Ascending aorta (tissue), 2 donors: ENCODE measurements at regions of chr10 and their contacts with region 1.

Region 1: DNA sequence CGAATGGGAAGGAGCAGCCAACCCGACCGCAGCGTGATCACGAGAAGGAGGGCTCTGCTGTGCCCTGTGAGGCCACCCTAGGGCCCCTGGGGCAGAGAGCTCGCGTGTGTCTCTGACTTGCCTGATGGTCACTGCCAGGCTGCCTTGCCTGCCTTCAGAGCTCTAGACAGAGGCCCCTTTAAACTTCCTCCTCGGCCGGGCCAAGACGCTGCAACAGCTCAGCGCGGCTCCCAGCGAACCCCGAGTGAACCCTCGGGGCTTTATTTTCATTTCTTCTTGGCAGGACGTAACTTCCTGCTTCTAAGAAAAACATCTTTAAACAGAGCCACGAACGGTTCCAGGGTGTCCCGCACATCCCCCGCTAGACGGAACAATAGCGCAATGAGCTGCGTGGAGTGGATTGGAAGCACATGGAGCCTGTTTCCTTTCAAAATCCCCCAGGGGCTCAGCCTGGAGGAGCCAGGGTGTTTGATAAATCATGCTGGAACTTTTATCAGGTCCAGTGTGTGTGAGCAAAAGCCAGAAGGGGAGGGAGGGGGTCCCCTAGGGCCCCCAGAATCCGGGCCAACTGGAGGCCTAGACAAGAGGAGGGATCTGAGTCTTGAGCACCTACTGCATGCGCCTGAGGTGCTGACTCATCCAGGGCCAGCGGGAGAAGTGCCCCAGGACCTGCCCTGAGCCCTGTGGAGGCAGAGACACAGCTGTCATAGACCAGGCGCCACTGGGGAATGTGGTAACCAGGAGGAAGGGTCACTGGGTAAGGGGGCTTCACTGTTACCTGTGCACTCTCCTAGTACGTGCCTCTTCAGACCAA is 134.1 kb upstream of the GDF10 start:
- DNase-seq: peak; percentile 51 to 90
- H3K4me3 ChIP-seq: peak overlapping the region; percentile 29 to 49
- H3K27ac ChIP-seq: peak overlapping the region; percentile 90 to 93
- H3K4me1 ChIP-seq: peaks cover 4 to 25% of the 10 kb centered on the region in 2 donors
- H3K27me3 ChIP-seq: no peaks in the 10 kb centered on the region
- CTCF ChIP-seq: no peak

Region 2: GRCh38 chr10:46022978-46023702 is 1142.8 kb before region 1 on chr10:
- intact Hi-C with region 1: loop called (anchors 10 kb)
- DNase-seq: peak; percentile 71 to 95
- H3K4me3 ChIP-seq: peak overlapping the region; percentile 63 to 67
- H3K27ac ChIP-seq: peak overlapping the region; percentile 80 to 82
- H3K4me1 ChIP-seq: peaks cover 3 to 27% of the 10 kb centered on the region in 2 donors
- H3K27me3 ChIP-seq: no peaks in the 10 kb centered on the region
- CTCF ChIP-seq: peak in 2 of 3 experiments; percentile 36 to 40

Region 3: DNA sequence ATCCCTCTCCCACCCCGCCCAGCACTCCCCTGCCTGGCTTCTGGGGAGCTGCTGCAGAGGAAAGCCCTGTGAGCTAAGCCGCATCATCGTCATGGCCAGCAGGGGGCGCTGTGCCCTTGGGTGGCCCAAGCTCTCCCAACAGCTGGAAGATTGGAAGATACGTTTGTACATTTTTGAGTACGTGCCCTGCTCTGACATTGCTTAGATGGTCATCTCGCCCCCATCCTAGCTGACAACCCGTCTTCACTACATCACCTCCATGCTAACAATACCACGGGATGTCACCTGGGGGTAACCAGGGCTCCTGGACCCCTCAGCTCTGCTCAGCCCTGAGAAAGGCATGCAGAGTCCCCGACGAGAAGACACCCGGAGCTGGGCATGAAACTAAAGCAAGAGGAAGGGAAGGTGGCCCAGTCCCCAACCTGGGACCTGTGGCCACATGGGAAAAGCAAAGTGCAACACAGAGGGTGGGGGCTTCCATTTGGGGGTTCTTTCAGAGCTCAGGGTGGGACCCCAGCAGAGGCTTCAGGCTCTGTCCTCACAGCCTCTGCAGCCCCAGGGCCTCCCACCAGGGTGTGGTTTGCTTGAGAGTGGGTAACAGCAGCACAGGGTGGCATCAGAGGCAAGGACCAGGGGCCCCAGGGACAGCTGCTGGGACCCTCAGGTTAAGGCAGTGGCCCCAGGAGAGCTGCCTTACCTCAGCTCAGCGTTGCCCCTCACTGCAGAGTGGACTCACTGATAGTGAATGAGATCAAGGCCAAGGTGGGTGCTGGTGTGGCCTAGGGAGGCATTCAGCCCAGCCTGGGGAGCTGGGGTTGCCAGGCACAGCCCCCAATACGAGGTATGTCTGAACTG is 118.0 kb before region 1 on chr10:
- intact Hi-C with region 1: loop called (anchors 5 kb)
- DNase-seq: peak in 1 of 2 donors; percentile 85
- H3K4me3 ChIP-seq: no peak overlapping the region
- H3K27ac ChIP-seq: peak overlapping the region in 1 of 2 donors; percentile 82
- H3K4me1 ChIP-seq: peaks cover 7 to 20% of the 10 kb centered on the region in 2 donors
- H3K27me3 ChIP-seq: no peaks in the 10 kb centered on the region
- CTCF ChIP-seq: peak; percentile 83 to 94 (median 89)

Region 4: GRCh38 chr10:47076949-47077361 is 89.0 kb before region 1 on chr10:
- intact Hi-C with region 1: no loop called
- DNase-seq: peak in 1 of 2 donors; percentile 7
- H3K4me3 ChIP-seq: no peak overlapping the region
- H3K27ac ChIP-seq: no peak overlapping the region
- H3K4me1 ChIP-seq: no peaks in the 10 kb centered on the region
- H3K27me3 ChIP-seq: no peaks in the 10 kb centered on the region
- CTCF ChIP-seq: no peak

Region 5: DNA sequence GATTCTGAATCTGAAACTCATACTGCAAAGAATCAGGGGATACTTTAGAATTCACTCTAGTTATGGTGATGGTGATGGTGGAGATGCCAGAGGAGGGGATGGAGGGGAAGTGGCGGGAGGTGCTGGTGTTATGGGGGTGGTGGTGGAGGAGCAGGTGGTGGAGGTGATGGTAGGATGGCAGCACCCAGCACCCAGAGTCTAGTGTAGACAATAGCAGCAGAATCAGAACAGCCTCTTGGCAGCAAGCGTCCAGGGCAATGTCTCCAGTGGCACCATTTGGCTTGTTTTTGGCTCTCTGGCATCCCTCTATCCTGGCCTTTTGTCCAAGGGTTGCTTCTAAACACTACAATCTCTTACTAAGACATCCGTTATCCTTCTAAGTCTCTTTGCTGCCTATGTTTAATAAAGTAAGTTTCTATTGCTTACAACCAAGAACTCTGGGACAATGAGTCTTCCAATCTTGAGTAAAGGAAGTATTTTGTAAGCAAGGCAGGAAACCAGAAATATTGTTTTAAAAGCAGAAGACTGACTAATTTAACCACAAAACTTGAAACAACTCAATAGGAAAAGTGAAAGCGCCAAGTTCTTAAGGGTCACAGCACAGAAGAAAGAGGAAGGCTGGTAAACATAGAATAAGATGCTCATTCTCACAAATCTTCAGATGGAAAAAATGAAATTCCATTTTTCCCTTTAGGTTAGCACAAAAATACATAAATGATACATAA is 91.6 kb after region 1 on chr10:
- intact Hi-C with region 1: loop called (anchors 2 kb)
- DNase-seq: no peak
- H3K4me3 ChIP-seq: no peak overlapping the region
- H3K27ac ChIP-seq: no peak overlapping the region
- H3K4me1 ChIP-seq: peaks cover 6 to 22% of the 10 kb centered on the region in 2 donors
- H3K27me3 ChIP-seq: no peaks in the 10 kb centered on the region
- CTCF ChIP-seq: no peak

Region 6: GRCh38 chr10:47300429-47300931 is 134.6 kb after region 1 on chr10:
- intact Hi-C with region 1: loop called (anchors 5 kb)
- DNase-seq: no peak
- H3K4me3 ChIP-seq: peak overlapping the region; percentile 65 to 77
- H3K27ac ChIP-seq: peak overlapping the region in 1 of 2 donors; percentile 48
- H3K4me1 ChIP-seq: peaks cover 0 to 31% of the 10 kb centered on the region in 2 donors
- H3K27me3 ChIP-seq: no peaks in the 10 kb centered on the region
- CTCF ChIP-seq: peak in 2 of 3 experiments; percentile 13 to 23

Region 7: DNA sequence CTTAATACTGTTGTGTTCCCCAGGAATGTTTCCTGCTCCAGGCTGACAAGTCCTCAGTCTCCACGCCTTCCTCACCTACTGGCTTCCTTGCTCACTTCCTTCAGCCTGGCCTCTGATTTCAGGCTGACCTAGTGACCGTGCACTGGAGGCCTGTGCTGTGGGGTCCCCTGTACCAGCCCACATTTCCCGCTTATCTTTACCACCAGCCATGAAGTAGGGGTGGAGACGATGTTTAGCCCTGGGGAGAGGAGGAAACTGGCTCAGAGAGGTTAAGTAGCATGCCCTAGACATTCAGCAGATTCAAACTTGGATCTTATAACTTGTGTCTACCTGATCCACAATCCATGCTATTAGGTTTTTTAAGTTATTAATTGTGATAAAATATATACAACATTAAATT is 223.0 kb after region 1 on chr10:
- intact Hi-C with region 1: loop called (anchors 5 kb)
- DNase-seq: no peak
- H3K4me3 ChIP-seq: no peak overlapping the region
- H3K27ac ChIP-seq: no peak overlapping the region
- H3K4me1 ChIP-seq: peaks cover 0 to 5% of the 10 kb centered on the region in 2 donors
- H3K27me3 ChIP-seq: no peaks in the 10 kb centered on the region
- CTCF ChIP-seq: no peak